Caco-2 (cell line): ENCODE measurements at regions of chr11 and their contacts with region 1.

Region 1: GRCh38 chr11:1113405-1114201 is 38.9 kb downstream of the MUC2 start:
- DNase-seq: peak in 1 of 2 experiments; percentile 32
- H3K4me3 ChIP-seq: no peak overlapping the region
- H3K4me3 Mint-ChIP-seq: no peak overlapping the region
- H3K27ac Mint-ChIP-seq: no peak overlapping the region
- H3K4me1 ChIP-seq: no peaks in the 10 kb centered on the region
- H3K4me1 Mint-ChIP-seq: peaks cover 7% of the 10 kb centered on the region
- H3K27me3 ChIP-seq: no peaks in the 10 kb centered on the region
- H3K27me3 Mint-ChIP-seq: peaks cover 3% of the 10 kb centered on the region
- CTCF ChIP-seq: no peak

Region 2: DNA sequence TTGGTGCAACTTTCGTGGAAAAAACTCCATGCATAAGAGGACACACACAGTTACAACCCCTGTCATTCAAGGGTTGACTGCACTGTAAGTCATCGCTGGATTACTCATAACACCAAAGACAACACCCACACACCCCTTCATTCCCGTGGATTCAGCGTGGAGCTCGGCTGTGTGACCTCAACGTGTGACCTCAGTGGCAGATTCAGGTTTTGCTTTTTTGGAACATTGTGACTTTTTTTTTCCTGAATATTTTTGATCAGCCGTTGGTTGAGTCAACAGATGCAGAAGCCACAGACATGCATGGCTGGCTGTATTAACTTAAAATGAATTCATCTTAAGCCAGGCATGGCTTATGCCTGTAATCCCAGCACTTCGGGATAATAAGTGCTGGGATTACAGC is 24.5 kb after region 1 on chr11:
- CTCF ChIA-PET with region 1: no interaction called
- POLR2A ChIA-PET with region 1: no interaction called
- intact Hi-C with region 1: no loop called
- DNase-seq: no peak
- H3K4me3 ChIP-seq: no peak overlapping the region
- H3K4me3 Mint-ChIP-seq: no peak overlapping the region
- H3K27ac Mint-ChIP-seq: no peak overlapping the region
- H3K4me1 ChIP-seq: no peaks in the 10 kb centered on the region
- H3K4me1 Mint-ChIP-seq: no peaks in the 10 kb centered on the region
- H3K27me3 ChIP-seq: no peaks in the 10 kb centered on the region
- H3K27me3 Mint-ChIP-seq: no peaks in the 10 kb centered on the region
- CTCF ChIP-seq: no peak

Region 3: GRCh38 chr11:1206391-1207271 is 93.0 kb after region 1 on chr11:
- CTCF ChIA-PET with region 1: interaction called, 12 read pairs
- POLR2A ChIA-PET with region 1: no interaction called
- intact Hi-C with region 1: no loop called
- DNase-seq: peak in 1 of 2 experiments; percentile 19
- H3K4me3 ChIP-seq: no peak overlapping the region
- H3K4me3 Mint-ChIP-seq: no peak overlapping the region
- H3K27ac Mint-ChIP-seq: no peak overlapping the region
- H3K4me1 ChIP-seq: no peaks in the 10 kb centered on the region
- H3K4me1 Mint-ChIP-seq: no peaks in the 10 kb centered on the region
- H3K27me3 ChIP-seq: no peaks in the 10 kb centered on the region
- H3K27me3 Mint-ChIP-seq: peaks cover 7% of the 10 kb centered on the region
- CTCF ChIP-seq: no peak

Region 4: DNA sequence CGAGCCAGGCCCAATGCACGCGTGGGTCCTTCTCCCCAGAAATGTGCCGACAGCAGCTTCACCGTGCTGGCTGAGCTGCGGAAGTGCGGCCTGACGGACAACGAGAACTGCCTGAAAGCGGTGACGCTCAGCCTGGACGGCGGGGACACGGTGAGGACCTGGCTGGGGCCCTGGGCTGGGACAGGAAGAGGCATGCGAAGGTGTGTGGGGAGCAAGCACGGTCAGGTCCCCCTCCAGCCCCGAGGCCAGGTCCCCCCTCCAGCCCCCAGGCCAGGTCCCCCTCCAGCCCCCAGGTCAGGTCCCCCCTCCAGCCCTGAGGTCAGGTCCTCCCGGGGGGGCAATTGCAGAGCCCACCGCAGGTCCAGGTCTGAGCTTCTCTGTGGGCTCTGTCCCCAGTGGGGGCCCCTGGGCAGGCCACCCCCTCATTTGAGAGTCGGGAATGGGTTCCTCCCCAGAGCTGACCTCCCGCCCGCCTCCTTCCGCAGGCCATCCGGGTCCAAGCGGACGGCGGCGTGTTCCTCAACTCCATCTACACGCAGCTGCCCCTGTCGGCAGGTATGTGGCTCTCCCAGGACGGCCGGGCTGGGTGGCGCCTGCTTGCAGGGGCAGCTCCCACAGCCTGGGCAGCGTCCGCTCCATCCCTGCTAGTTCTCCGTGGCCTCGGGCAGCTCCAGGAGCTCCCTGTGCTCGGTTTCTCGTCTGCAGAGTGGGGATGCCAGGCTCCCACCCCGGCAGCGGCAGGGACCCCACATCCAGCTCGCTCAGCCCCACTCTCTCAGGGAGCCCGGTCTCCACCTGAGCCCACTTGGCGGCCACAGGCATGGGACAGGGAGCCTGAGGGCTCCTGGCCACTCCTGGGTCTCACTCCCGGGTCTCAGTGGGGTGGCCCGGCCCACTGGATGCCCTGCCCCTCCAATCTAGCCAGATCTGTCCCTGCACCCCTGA is 117.1 kb after region 1 on chr11:
- CTCF ChIA-PET with region 1: no interaction called
- POLR2A ChIA-PET with region 1: no interaction called
- intact Hi-C with region 1: loop called (anchors 10 kb)
- DNase-seq: peak; percentile 60 to 65
- H3K4me3 ChIP-seq: no peak overlapping the region
- H3K4me3 Mint-ChIP-seq: no peak overlapping the region
- H3K27ac Mint-ChIP-seq: no peak overlapping the region
- H3K4me1 ChIP-seq: no peaks in the 10 kb centered on the region
- H3K4me1 Mint-ChIP-seq: no peaks in the 10 kb centered on the region
- H3K27me3 ChIP-seq: no peaks in the 10 kb centered on the region
- H3K27me3 Mint-ChIP-seq: peaks cover 3% of the 10 kb centered on the region
- CTCF ChIP-seq: peak; percentile 16 to 38

Region 5: GRCh38 chr11:1515082-1516060 is 401.8 kb after region 1 on chr11:
- CTCF ChIA-PET with region 1: no interaction called
- POLR2A ChIA-PET with region 1: no interaction called
- intact Hi-C with region 1: loop called (anchors 2 kb)
- DNase-seq: peak; percentile 55 to 77
- H3K4me3 ChIP-seq: no peak overlapping the region
- H3K4me3 Mint-ChIP-seq: no peak overlapping the region
- H3K27ac Mint-ChIP-seq: no peak overlapping the region
- H3K4me1 ChIP-seq: no peaks in the 10 kb centered on the region
- H3K4me1 Mint-ChIP-seq: peaks cover 12% of the 10 kb centered on the region
- H3K27me3 ChIP-seq: no peaks in the 10 kb centered on the region
- H3K27me3 Mint-ChIP-seq: no peaks in the 10 kb centered on the region
- CTCF ChIP-seq: peak; percentile 68 to 84